Activated CD8-positive, alpha-beta T cell treated with anti-CD3 and anti-CD28 coated beads, Interleukin-2, amount 10 ng/mL, durations not matched to agents 7 days and 5 days (primary cell): ENCODE measurements at regions of chr11 and their contacts with region 1.

Region 1: GRCh38 chr11:94504689-94505293 is 7.5 kb upstream of the C11orf97 start:
- DNase-seq: peak; percentile 31
- ATAC-seq: peak; percentile 55
- H3K4me3 Mint-ChIP-seq: no peak overlapping the region
- H3K27ac Mint-ChIP-seq: no peak overlapping the region
- H3K4me1 Mint-ChIP-seq: no peaks in the 10 kb centered on the region
- H3K27me3 Mint-ChIP-seq: peaks cover 3% of the 10 kb centered on the region

Region 2: GRCh38 chr11:93921695-93922468 is 582.9 kb before region 1 on chr11:
- CTCF ChIA-PET with region 1: interaction called, 11 read pairs
- POLR2A ChIA-PET with region 1: no interaction called
- DNase-seq: peak; percentile 47
- ATAC-seq: no peak
- H3K4me3 Mint-ChIP-seq: no peak overlapping the region
- H3K27ac Mint-ChIP-seq: no peak overlapping the region
- H3K4me1 Mint-ChIP-seq: no peaks in the 10 kb centered on the region
- H3K27me3 Mint-ChIP-seq: peaks cover 7% of the 10 kb centered on the region

Region 3: GRCh38 chr11:94325681-94326080 is 179.1 kb before region 1 on chr11:
- CTCF ChIA-PET with region 1: interaction called, 12 read pairs
- POLR2A ChIA-PET with region 1: interaction called, 3 read pairs
- DNase-seq: peak; percentile 68
- ATAC-seq: peak; percentile 84
- H3K4me3 Mint-ChIP-seq: no peak overlapping the region
- H3K27ac Mint-ChIP-seq: no peak overlapping the region
- H3K4me1 Mint-ChIP-seq: no peaks in the 10 kb centered on the region
- H3K27me3 Mint-ChIP-seq: no peaks in the 10 kb centered on the region

Region 4: GRCh38 chr11:94516725-94517124 is 11.9 kb after region 1 on chr11:
- CTCF ChIA-PET with region 1: interaction called, 18 read pairs
- POLR2A ChIA-PET with region 1: no interaction called
- DNase-seq: no peak
- ATAC-seq: no peak
- H3K4me3 Mint-ChIP-seq: no peak overlapping the region
- H3K27ac Mint-ChIP-seq: no peak overlapping the region
- H3K4me1 Mint-ChIP-seq: peaks cover 14% of the 10 kb centered on the region
- H3K27me3 Mint-ChIP-seq: peaks cover 33% of the 10 kb centered on the region